ENCODE measurements at regions of chr7 and their contacts with region 1.

Region 1: GRCh38 chr7:157073949-157074624 is 63.6 kb upstream of the MNX1 start:
- DNase-seq: no peak
- H3K4me3 ChIP-seq: no peak overlapping the region
- H3K27ac ChIP-seq: no peak overlapping the region
- H3K4me1 ChIP-seq: no peaks in the 10 kb centered on the region
- H3K27me3 ChIP-seq: peaks cover 13 to 16% of the 10 kb centered on the region in 2 experiments
- CTCF ChIP-seq: no peak
- POLR2A ChIP-seq: no peak

Region 2: DNA sequence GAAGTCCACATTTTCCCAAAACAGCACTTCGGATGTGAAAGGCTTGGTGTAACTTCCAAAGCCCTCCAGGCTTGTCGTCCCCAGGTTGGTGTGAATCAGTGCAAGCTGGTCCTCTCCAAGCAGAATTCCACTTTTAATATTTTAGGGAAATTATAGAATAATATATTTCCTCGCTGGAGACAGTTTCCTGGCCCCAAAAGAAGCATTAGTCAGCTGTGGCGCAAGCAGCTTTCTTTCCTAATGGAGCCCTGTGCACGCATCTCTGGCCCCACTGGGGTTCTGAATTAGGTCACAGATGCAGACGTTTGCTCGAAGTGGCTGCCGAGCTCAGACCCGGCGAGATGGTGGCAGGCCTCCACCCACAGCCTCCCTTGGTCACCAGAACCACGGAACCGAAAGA is 30.3 kb before region 1 on chr7:
- CTCF ChIA-PET with region 1: no interaction called
- POLR2A ChIA-PET with region 1: interaction called, 12 read pairs
- dilution Hi-C with region 1: no loop called
- intact Hi-C with region 1: no loop called
- DNase-seq: no peak
- H3K4me3 ChIP-seq: no peak overlapping the region
- H3K27ac ChIP-seq: no peak overlapping the region
- H3K4me1 ChIP-seq: no peaks in the 10 kb centered on the region
- H3K27me3 ChIP-seq: no peaks in the 10 kb centered on the region
- CTCF ChIP-seq: no peak
- POLR2A ChIP-seq: no peak